RWPE1 (cell line): ENCODE measurements at regions of chr15 and their contacts with region 1.

Region 1: DNA sequence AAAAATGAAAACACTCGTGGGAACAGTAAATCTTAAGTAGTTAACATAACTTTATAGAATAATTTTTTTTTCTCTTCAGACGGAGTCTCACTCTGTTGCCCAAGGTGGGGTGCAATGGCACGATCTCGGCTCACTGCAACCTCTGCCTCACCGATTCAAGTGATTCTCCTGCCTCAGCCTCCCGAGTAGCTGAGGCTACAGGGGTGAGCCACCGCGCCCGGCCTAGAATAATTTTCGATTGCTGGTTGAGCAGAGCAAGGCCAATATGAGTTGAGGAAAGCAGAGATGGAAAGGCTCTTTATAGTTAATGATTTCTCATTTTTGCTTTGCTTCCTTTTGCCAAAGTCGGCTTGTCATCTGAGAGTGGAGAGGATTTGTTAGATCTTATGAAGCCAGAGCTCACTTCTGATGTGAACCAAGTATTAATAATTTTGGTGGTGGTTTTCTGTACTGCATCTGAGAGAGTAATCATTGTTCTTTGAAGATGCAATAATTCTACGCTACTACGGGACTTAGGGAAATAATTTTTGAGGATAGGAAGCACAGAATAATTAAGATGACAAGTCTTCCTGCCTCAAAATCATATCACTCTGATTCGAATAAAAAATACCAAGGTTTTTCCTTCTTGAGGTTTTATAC is 1.6 kb upstream of the GOLM2 start:
- DNase-seq: peak; percentile 10
- H3K27ac ChIP-seq: peak overlapping the region; percentile 47
- CTCF ChIP-seq: no peak; the same call in 1 of the 2 replicates

Region 2: GRCh38 chr15:43748376-43748775 is 538.6 kb before region 1 on chr15:
- CTCF ChIA-PET with region 1: no interaction called
- POLR2A ChIA-PET with region 1: no interaction called
- DNase-seq: peak; percentile 31
- H3K27ac ChIP-seq: peak overlapping the region; percentile 61; the same call in 1 of the 2 replicates
- CTCF ChIP-seq: no peak

Region 3: DNA sequence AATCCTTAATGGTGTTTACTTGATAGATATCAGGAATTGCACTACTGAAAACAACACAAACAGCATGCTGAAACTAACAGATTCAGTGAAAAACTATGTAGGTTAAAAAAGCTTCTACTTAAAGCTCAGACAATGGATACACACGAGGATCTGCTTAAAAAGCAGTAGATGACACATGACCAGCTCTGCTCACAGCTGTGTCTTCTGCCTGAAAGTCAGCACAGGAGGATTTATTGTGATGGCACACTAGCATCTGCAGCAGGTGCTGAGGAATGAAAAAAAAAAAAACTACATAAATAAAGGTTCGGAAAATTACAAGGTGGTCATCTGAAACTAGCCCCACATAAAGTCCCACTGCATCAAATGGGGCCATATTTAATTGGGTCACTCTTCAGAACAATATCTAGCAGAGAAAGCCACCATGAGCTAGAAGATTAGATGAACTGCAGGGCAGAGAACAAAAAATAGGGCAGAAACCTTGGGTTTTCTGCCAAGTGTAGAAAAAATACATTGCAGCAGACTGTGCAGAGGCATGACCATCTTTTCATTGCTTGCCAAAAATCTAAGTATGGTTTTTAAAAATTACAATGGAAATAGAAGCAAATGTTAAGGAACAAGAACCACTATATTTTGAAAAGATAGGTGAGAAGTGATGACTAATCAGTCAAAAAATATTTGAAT is 11.6 kb before region 1 on chr15:
- CTCF ChIA-PET with region 1: no interaction called
- POLR2A ChIA-PET with region 1: interaction called, 10 read pairs
- DNase-seq: no peak
- H3K27ac ChIP-seq: no peak overlapping the region
- CTCF ChIP-seq: no peak